H1 (cell line): ENCODE measurements at regions of chr16 and their contacts with region 1.

Region 1: GRCh38 chr16:67159593-67160406 is at the starts of genes FBXL8 and TRADD:
- DNase-seq: peak in 1 of 2 experiments; percentile 83
- H3K4me3 ChIP-seq: peak within 1 kb of the TSS; percentile 37 to 61 (median 46)
- H3K27ac ChIP-seq: no peak within 1 kb of the TSS
- H3K4me1 ChIP-seq: peaks cover 0 to 29% (median 20%) of the 10 kb centered on the region in 4 experiments; a peak in 6 of 7 replicates
- H3K27me3 ChIP-seq: peaks cover 93 to 100% (median 98%) of the 10 kb centered on the region in 4 experiments
- CTCF ChIP-seq: peak; percentile 20 to 46 (median 35); a peak in 3 of 4 replicates
- EP300 ChIP-seq: no peak
- POLR2A ChIP-seq: no peak
- RAD21 ChIP-seq: no peak; a peak in 1 of 4 replicates
- total RNA-seq, gene FBXL8: not detected in 2 replicates
- total RNA-seq, gene TRADD: 0.19 and 0.29 TPM in 2 replicates

Region 2: GRCh38 chr16:66954097-66954659 is 205.6 kb before region 1 on chr16:
- CTCF ChIA-PET with region 1: interaction called, 32 read pairs
- POLR2A ChIA-PET with region 1: interaction called, 4 read pairs
- DNase-seq: peak; percentile 38 to 88
- H3K4me3 ChIP-seq: no peak overlapping the region
- H3K27ac ChIP-seq: no peak overlapping the region
- H3K4me1 ChIP-seq: no peaks in the 10 kb centered on the region
- H3K27me3 ChIP-seq: peaks cover 0 to 14% (median 13%) of the 10 kb centered on the region in 4 experiments; a peak in 6 of 7 replicates
- CTCF ChIP-seq: peak; percentile 71 to 84 (median 83)
- EP300 ChIP-seq: no peak
- POLR2A ChIP-seq: no peak
- RAD21 ChIP-seq: peak; percentile 88 to 90

Region 3: DNA sequence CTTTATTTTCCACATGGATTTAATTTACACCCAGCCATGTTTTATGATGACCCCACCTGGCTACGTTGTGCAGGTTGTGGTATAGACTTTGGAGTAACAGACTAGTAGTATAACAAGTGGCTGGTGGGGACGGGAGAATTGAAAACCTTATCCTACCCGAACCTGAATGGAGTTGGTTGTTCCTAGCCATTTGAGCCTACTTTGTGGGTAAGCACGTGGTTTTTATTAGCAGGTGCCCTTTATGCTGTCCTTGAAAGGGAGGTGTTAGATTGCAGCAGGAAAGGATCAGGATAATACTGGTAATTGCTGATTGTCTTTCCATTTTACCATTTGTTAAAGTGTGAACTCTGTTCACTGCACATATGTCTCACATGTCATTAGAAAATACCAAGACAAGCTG is 81.9 kb before region 1 on chr16:
- CTCF ChIA-PET with region 1: no interaction called
- POLR2A ChIA-PET with region 1: no interaction called
- DNase-seq: no peak
- H3K4me3 ChIP-seq: no peak overlapping the region
- H3K27ac ChIP-seq: no peak overlapping the region
- H3K4me1 ChIP-seq: no peaks in the 10 kb centered on the region
- H3K27me3 ChIP-seq: no peaks in the 10 kb centered on the region
- CTCF ChIP-seq: no peak
- EP300 ChIP-seq: no peak
- POLR2A ChIP-seq: no peak
- RAD21 ChIP-seq: no peak

Region 4: GRCh38 chr16:67104061-67104460 is 55.7 kb before region 1 on chr16:
- CTCF ChIA-PET with region 1: interaction called, 14 read pairs
- POLR2A ChIA-PET with region 1: no interaction called
- DNase-seq: peak in 1 of 2 experiments; percentile 64
- H3K4me3 ChIP-seq: no peak overlapping the region
- H3K27ac ChIP-seq: no peak overlapping the region
- H3K4me1 ChIP-seq: peaks cover 0 to 2% (median under 1%) of the 10 kb centered on the region in 4 experiments; a peak in 3 of 7 replicates
- H3K27me3 ChIP-seq: peaks cover 0 to 4% (median 1%) of the 10 kb centered on the region in 4 experiments; a peak in 2 of 7 replicates
- CTCF ChIP-seq: peak; percentile 64 to 84 (median 64)
- EP300 ChIP-seq: no peak
- POLR2A ChIP-seq: no peak
- RAD21 ChIP-seq: peak; percentile 21 to 40

Region 5: DNA sequence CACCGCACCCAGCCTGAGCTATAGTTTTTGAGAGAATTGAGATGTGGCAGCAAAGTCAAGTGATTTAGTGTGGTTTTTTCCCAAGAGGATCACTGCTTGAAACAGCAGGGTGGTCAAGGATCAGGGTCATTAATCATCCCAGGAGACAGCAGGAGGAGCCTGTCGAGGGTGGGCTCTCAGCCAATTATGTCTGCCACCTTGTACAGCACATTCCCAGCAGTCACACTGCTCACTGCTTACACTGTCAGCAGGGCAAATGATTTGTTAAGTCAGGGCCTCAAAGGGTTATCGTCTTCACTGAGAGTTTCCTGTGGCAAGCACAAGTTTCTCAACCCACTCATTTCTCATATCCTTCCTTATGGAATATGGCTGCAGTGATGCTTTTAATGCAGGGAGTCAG is 22.2 kb before region 1 on chr16:
- CTCF ChIA-PET with region 1: interaction called, 10 read pairs
- POLR2A ChIA-PET with region 1: no interaction called
- DNase-seq: no peak
- H3K4me3 ChIP-seq: no peak overlapping the region
- H3K27ac ChIP-seq: no peak overlapping the region
- H3K4me1 ChIP-seq: no peaks in the 10 kb centered on the region
- H3K27me3 ChIP-seq: no peaks in the 10 kb centered on the region
- CTCF ChIP-seq: no peak
- EP300 ChIP-seq: no peak
- POLR2A ChIP-seq: no peak
- RAD21 ChIP-seq: no peak

Region 6: DNA sequence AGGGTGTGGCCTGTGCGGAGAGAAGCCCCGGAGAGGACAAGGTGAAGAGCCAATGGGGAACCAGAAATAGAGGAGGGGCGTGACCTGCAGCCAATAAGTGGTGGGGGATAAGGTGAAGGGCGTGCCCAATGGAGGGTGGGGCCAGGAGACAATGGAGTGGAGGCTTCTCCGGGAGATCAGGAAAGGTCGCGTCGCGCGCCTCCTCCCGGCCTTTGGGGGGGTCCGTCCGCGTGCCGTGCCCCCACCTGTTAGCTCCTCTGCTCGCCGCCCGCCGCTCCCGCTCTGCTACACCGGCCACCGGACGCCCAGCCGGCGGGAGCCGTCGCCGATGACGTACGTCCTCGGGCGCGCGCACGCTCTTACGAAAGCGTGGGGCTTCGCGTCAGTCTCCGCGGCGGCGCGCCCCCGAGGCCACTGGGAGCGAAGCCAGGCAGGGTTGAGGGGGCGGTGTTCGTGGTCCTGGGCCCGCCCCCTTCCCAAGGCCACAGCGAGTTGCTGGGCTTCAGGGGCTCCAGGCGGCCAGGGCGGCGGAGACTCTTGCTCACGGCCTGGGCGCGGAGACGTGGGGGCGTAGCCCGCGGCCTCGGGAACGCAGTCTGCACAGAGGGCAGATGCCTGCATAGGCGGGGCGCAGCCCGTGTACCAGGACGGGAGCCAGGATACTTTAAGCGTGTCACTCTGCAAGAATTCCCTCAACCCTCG is 24.0 kb after region 1 on chr16 and contains the start of gene MATCAP1:
- CTCF ChIA-PET with region 1: interaction called, 78 read pairs
- POLR2A ChIA-PET with region 1: interaction called, 59 read pairs
- DNase-seq: peak; percentile 87 to 95
- H3K4me3 ChIP-seq: peak within 1 kb of the TSS; percentile 73 to 90 (median 85)
- H3K27ac ChIP-seq: peak within 1 kb of the TSS; percentile 98
- H3K4me1 ChIP-seq: peaks cover 0 to 19% (median 12%) of the 10 kb centered on the region in 4 experiments; a peak in 5 of 7 replicates
- H3K27me3 ChIP-seq: peaks cover 8 to 35% (median 21%) of the 10 kb centered on the region in 4 experiments
- CTCF ChIP-seq: no peak
- EP300 ChIP-seq: no peak
- POLR2A ChIP-seq: peak in 1 of 2 experiments; percentile 79; a peak in 2 of 3 replicates
- RAD21 ChIP-seq: no peak
- total RNA-seq, gene MATCAP1: 22.9 and 23.1 TPM in 2 replicates